ENCODE measurements at regions of chr2 and their contacts with region 1.

Region 1: GRCh38 chr2:225192869-225193268 is 150.6 kb upstream of the DOCK10 start:
- DNase-seq: peak; percentile 58
- ATAC-seq: peak; percentile 38
- H3K4me3 ChIP-seq: no peak overlapping the region
- H3K27ac ChIP-seq: no peak overlapping the region
- H3K4me1 ChIP-seq: peaks cover 24% of the 10 kb centered on the region
- H3K27me3 ChIP-seq: no peaks in the 10 kb centered on the region
- CTCF ChIP-seq: no peak

Region 2: GRCh38 chr2:224946895-224947294 is 246.0 kb before region 1 on chr2:
- CTCF ChIA-PET with region 1: no interaction called
- POLR2A ChIA-PET with region 1: no interaction called
- intact Hi-C with region 1: no loop called
- DNase-seq: peak; percentile 72
- ATAC-seq: peak; percentile 89
- H3K4me3 ChIP-seq: 0 out of 2 replicates have a peak overlapping the region, but pooled peaks have one; percentile 12
- H3K27ac ChIP-seq: peak overlapping the region; percentile 21; the same call in 1 of the 2 replicates
- H3K4me1 ChIP-seq: peaks cover 10% of the 10 kb centered on the region
- H3K27me3 ChIP-seq: no peaks in the 10 kb centered on the region
- CTCF ChIP-seq: no peak

Region 3: GRCh38 chr2:225131898-225132297 is 61.0 kb before region 1 on chr2:
- CTCF ChIA-PET with region 1: no interaction called
- POLR2A ChIA-PET with region 1: no interaction called
- intact Hi-C with region 1: loop called (anchors 2 kb)
- DNase-seq: no peak
- ATAC-seq: peak; percentile 33; the same call in 1 of the 2 replicates
- H3K4me3 ChIP-seq: no peak overlapping the region
- H3K27ac ChIP-seq: no peak overlapping the region
- H3K4me1 ChIP-seq: no peaks in the 10 kb centered on the region
- H3K27me3 ChIP-seq: no peaks in the 10 kb centered on the region
- CTCF ChIP-seq: no peak

Measured in PC-3 (cell line).